Heart left ventricle (tissue), 16 donors: ENCODE measurements at regions of chr14 and their contacts with region 1.

Region 1: GRCh38 chr14:51219473-51220448 is 20.3 kb upstream of the TMX1 start:
- DNase-seq: no peak
- ATAC-seq: no peak
- H3K4me3 ChIP-seq: no peak overlapping the region
- H3K27ac ChIP-seq: no peak overlapping the region
- H3K4me1 ChIP-seq: no peaks in the 10 kb centered on the region
- H3K27me3 ChIP-seq: no peaks in the 10 kb centered on the region
- CTCF ChIP-seq: peak; percentile 38 to 75 (median 49)
- POLR2A ChIP-seq: no peak

Region 2: DNA sequence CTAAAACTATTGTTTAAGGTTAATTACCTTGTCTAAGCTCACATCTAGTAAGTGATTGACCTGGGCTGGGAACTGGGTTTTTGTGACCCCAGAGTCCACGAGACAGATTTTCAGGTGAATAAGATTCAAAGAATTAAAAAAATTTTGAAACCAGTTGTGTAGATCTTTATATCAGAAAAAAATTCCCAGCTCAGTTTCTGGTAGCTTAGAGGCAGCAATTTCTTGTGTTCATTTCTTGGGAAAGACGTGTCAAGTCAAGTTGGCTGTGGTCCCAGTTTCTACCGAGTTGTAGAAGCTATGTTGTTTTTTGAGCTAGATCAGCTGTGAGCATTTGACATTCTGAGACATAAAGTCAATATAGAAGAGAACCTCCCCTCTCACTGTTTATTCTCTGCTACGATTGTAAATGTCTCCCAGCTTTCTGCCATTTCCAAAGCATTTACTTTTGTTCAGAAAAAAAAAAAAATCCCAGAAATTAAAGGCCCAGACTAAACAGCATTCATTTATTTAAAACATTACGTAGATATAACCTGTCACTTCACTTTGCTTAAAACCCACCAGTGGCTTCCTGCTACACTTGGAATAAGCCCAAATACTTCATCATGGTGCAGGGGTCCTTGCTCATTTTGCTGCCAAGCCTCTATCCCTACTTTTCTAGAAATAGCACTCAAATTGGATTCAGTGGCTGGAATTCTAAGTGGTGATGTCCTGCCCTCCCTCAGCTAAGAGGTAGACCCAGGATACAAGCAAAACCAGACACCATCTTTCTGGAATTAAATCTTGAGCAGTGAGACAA is 255.0 kb before region 1 on chr14:
- intact Hi-C with region 1: loop called in 5 of 10 experiments (anchors 5 to 10 kb)
- DNase-seq: peak in 3 of 5 donors; percentile 42 to 60 (median 44)
- ATAC-seq: no peak
- H3K4me3 ChIP-seq: no peak overlapping the region
- H3K27ac ChIP-seq: peak overlapping the region in 1 of 12 donors; percentile 48
- H3K4me1 ChIP-seq: peaks cover 0 to 35% (median 0%) of the 10 kb centered on the region in 12 donors
- H3K27me3 ChIP-seq: no peaks in the 10 kb centered on the region
- CTCF ChIP-seq: no peak
- POLR2A ChIP-seq: no peak